KBM-7 (cell line): ENCODE measurements at regions of chr10 and their contacts with region 1.

Region 1: GRCh38 chr10:63720072-63720537 is 198.9 kb downstream of the REEP3 start:
- DNase-seq: peak; percentile 71

Region 2: GRCh38 chr10:62528441-62528840 is 1191.7 kb before region 1 on chr10:
- in situ Hi-C with region 1: no loop called
- DNase-seq: peak; percentile 21

Region 3: DNA sequence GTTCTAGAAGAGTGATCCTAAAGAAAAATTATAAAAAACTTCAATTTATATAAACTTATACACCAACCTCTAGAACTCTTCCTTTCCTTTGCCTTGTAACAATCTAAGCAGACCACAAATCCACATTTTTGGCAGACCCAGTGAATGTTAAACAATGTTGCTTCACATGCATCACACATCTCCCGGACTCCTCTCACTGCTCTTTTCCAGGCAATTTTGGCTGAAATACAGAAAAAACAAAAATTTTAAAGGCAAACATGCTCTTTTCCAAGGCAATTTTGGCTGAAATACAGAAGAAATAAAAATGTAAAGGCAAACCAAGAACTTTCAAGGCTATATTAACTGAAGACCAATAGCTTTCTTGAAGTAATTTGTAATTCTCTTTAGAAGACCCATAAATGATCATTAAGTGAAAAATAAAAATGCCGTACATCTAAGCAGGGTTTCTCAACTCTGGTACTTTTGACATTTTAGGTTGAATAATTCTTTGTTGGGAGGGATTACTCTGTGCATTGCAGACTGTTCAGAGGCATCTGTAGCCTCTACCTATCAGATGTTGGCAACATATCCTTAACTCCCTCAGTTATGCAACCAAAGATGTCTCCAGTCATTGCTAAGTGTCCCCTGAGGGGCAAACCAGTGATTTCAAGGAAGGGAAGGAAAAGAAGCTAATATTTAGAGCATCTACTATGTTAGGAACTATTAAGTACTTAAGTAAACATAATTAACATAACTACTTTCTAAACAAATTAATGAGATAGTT is 522.6 kb before region 1 on chr10:
- in situ Hi-C with region 1: loop called (anchors 25 kb)
- DNase-seq: no peak